Activated CD8-positive, alpha-beta T cell treated with anti-CD3 and anti-CD28 coated beads for 36 hours (primary cell): ENCODE measurements at regions of chr18 and their contacts with region 1.

Region 1: GRCh38 chr18:21298351-21298750 is 56.3 kb downstream of the GREB1L start:
- DNase-seq: no peak
- ATAC-seq: no peak
- H3K4me3 Mint-ChIP-seq: no peak overlapping the region
- H3K27ac Mint-ChIP-seq: no peak overlapping the region
- H3K4me1 Mint-ChIP-seq: no peaks in the 10 kb centered on the region
- H3K27me3 Mint-ChIP-seq: peaks cover 11% of the 10 kb centered on the region
- CTCF ChIP-seq: no peak

Region 2: GRCh38 chr18:21315741-21316187 is 17.4 kb after region 1 on chr18:
- CTCF ChIA-PET with region 1: no interaction called
- POLR2A ChIA-PET with region 1: no interaction called
- intact Hi-C with region 1: no loop called
- DNase-seq: no peak
- ATAC-seq: no peak
- H3K4me3 Mint-ChIP-seq: no peak overlapping the region
- H3K27ac Mint-ChIP-seq: no peak overlapping the region
- H3K4me1 Mint-ChIP-seq: no peaks in the 10 kb centered on the region
- H3K27me3 Mint-ChIP-seq: peaks cover 2% of the 10 kb centered on the region
- CTCF ChIP-seq: no peak

Region 3: GRCh38 chr18:21359746-21360145 is 61.4 kb after region 1 on chr18:
- CTCF ChIA-PET with region 1: no interaction called
- POLR2A ChIA-PET with region 1: no interaction called
- intact Hi-C with region 1: loop called (anchors 10 kb)
- DNase-seq: no peak
- ATAC-seq: no peak
- H3K4me3 Mint-ChIP-seq: no peak overlapping the region
- H3K27ac Mint-ChIP-seq: no peak overlapping the region
- H3K4me1 Mint-ChIP-seq: no peaks in the 10 kb centered on the region
- H3K27me3 Mint-ChIP-seq: peaks cover 12% of the 10 kb centered on the region
- CTCF ChIP-seq: no peak

Region 4: DNA sequence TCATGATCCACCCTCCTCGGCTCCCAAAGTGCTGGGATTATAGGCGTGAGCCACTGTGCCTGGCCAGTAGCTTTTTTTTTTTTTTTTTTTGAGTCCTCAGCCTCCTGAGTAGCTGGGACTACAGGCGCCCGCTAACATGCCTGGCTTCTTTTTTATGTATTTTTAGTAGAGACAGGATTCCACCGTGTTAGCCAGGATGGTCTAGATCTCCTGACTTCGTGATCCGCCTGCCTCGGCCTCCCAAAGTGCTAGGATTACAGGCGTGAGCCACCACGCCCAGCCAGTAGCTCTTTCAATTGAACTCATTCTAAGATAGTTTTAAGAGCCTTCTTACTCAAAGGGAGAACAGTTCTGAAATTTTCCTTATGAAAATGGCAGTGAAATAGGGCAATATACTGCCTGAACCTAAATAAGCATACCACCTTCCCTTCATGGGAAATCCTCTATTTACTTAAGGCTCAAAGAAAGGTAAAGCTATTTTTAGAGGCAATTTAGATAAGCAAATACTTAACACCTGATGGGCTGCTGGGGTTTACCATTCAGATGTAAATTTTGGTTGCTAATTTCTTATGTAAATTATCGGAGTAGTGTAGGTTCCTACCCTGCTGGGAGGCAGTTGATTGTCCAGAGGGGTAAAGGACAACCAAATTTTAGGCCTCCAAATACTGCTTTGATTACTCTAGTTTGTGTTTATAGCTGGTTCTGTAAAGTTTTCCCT is 88.3 kb after region 1 on chr18:
- CTCF ChIA-PET with region 1: no interaction called
- POLR2A ChIA-PET with region 1: no interaction called
- intact Hi-C with region 1: no loop called
- DNase-seq: no peak
- ATAC-seq: no peak
- H3K4me3 Mint-ChIP-seq: no peak overlapping the region
- H3K27ac Mint-ChIP-seq: no peak overlapping the region
- H3K4me1 Mint-ChIP-seq: no peaks in the 10 kb centered on the region
- H3K27me3 Mint-ChIP-seq: peaks cover 2% of the 10 kb centered on the region
- CTCF ChIP-seq: no peak